HEK293 (cell line): ENCODE measurements at regions of chr10 and their contacts with region 1.

Region 1: GRCh38 chr10:5495491-5495890 is 3.9 kb downstream of the CALML5 start:
- H3K4me3 ChIP-seq: no peak overlapping the region
- H3K27ac ChIP-seq: no peak overlapping the region
- H3K4me1 ChIP-seq: no peaks in the 10 kb centered on the region
- CTCF ChIP-seq: no peak

Region 2: DNA sequence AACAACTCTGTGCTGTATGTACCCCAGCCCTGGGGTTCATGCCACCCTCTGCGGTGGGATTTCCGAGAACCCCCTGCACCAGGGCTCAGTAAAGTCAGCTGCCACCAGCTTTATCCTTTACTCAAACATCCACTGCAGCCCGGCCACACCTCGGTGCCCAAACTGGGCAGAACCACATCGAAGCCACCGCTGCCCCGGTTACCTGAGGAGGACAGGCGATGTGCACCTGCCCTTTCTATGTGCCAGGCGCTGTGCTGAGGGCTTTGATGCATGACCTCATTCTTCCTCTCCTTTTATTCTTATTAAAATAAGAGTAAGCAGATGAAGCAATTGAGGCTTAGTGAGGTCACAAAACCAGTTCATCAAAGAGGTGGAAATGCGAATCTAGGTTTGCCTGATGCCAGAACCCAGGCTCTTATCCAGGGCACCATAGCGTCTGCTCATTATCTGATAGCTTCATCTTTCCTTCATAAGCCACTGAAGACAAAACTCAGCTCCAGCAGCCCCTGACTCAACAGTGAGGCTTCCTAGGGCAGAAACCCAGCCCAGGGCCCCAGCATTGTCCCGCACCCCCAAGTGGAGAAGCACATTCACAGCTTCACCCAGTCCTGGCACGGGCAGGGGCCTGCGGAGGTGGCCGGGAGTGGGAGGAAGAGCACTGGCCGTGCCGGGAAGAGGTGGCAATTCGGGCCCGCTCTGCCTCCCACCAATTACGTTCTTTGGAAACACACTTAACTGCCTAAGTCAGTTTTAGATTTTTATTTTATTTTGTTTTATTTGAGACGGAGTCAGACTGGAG is 14.0 kb after region 1 on chr10:
- CTCF ChIA-PET with region 1: interaction called, 10 read pairs
- POLR2A ChIA-PET with region 1: no interaction called
- H3K4me3 ChIP-seq: no peak overlapping the region
- H3K27ac ChIP-seq: no peak overlapping the region
- H3K4me1 ChIP-seq: no peaks in the 10 kb centered on the region
- CTCF ChIP-seq: no peak

Region 3: DNA sequence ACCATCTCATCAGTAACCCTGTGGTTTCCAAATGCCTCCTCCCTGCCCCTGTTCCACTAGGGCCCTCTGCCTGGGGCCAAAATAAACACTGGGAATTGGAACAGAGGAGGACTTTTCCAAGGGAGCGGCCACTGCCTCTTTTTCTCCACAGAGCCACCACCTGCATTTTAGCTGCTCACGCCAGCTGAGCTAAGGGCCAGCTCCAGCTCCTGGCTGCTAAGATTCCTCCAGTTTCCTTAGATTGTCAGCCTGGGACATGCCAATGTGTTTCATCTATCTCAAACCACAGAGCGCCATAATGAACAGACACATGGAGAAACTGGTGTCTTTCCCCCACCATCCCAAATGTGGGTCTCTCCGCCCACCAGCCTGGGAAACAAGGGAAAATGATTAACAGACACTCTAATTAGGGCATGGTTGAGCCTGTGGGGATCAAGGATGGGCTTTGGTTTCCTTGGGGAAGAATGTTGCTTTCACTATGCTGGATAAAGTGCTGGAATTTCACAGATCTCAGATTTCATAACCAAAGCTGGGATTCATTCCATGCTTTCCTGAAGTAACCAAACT is 118.7 kb after region 1 on chr10:
- CTCF ChIA-PET with region 1: no interaction called
- POLR2A ChIA-PET with region 1: no interaction called
- H3K4me3 ChIP-seq: no peak overlapping the region
- H3K27ac ChIP-seq: no peak overlapping the region
- H3K4me1 ChIP-seq: peaks cover 8% of the 10 kb centered on the region
- CTCF ChIP-seq: no peak

Region 4: GRCh38 chr10:5752301-5752871 is 256.9 kb after region 1 on chr10:
- CTCF ChIA-PET with region 1: no interaction called
- POLR2A ChIA-PET with region 1: no interaction called
- H3K4me3 ChIP-seq: no peak overlapping the region
- H3K27ac ChIP-seq: no peak overlapping the region
- H3K4me1 ChIP-seq: no peaks in the 10 kb centered on the region
- CTCF ChIP-seq: no peak